IMR-90 (cell line): ENCODE measurements at regions of chrX and their contacts with region 1.

Region 1: GRCh38 chrX:123738378-123738940 is 5.6 kb upstream of the THOC2 start:
- DNase-seq: no peak
- ATAC-seq: no peak
- H3K4me3 ChIP-seq: no peak overlapping the region
- H3K27ac ChIP-seq: no peak overlapping the region
- H3K4me1 ChIP-seq: no peaks in the 10 kb centered on the region; the same call in 1 of the 2 replicates
- H3K27me3 ChIP-seq: no peaks in the 10 kb centered on the region
- CTCF ChIP-seq: no peak
- POLR2A ChIP-seq: no peak
- RAD21 ChIP-seq: no peak

Region 2: DNA sequence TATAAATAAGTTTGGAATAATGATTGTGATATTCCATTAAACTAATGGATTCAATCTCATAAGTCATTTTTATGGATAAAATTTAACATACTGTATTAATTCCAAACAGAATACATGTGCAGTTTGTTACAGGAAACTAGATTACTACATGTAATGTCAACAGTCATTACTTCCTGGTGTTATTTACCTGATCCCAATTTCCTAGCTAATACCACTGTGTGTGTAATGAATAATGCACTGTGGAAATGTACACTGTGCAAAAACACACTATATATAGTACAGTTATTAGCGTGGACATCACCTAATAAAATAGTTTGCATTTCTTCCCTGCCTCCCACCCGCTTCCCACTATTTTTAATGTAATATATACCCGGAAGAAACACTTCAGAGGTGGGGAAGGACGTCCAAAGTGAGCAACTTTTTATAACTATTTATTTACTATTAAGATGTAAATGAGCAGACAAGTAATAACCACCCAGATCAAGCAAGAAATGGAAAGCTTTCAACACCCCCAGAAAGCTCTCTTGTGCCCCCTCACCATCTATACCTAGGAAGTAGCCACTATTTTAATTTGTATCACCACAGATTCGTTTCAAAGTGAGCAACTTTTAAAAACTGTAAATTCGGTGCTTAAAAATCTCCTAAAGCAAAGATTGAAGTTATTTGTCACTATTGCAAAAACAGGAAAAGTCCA is 224.7 kb before region 1 on chrX:
- CTCF ChIA-PET with region 1: no interaction called
- POLR2A ChIA-PET with region 1: no interaction called
- dilution Hi-C with region 1: no loop called
- in situ Hi-C with region 1: no loop called
- intact Hi-C with region 1: no loop called
- DNase-seq: no peak
- ATAC-seq: no peak
- H3K4me3 ChIP-seq: no peak overlapping the region
- H3K27ac ChIP-seq: no peak overlapping the region
- H3K4me1 ChIP-seq: no peaks in the 10 kb centered on the region
- H3K27me3 ChIP-seq: no peaks in the 10 kb centered on the region
- CTCF ChIP-seq: no peak
- POLR2A ChIP-seq: no peak
- RAD21 ChIP-seq: no peak

Region 3: GRCh38 chrX:123648028-123648810 is 90.2 kb before region 1 on chrX:
- CTCF ChIA-PET with region 1: no interaction called
- POLR2A ChIA-PET with region 1: no interaction called
- dilution Hi-C with region 1: no loop called
- in situ Hi-C with region 1: no loop called
- intact Hi-C with region 1: no loop called
- DNase-seq: peak; percentile 83
- ATAC-seq: peak; percentile 98
- H3K4me3 ChIP-seq: no peak overlapping the region
- H3K27ac ChIP-seq: no peak overlapping the region
- H3K4me1 ChIP-seq: peaks cover 1% of the 10 kb centered on the region; the same call in 1 of the 2 replicates
- H3K27me3 ChIP-seq: no peaks in the 10 kb centered on the region
- CTCF ChIP-seq: no peak
- POLR2A ChIP-seq: no peak
- RAD21 ChIP-seq: no peak

Region 4: GRCh38 chrX:123779908-123780396 is 41.5 kb after region 1 on chrX:
- CTCF ChIA-PET with region 1: interaction called, 3 read pairs
- POLR2A ChIA-PET with region 1: interaction called, 14 read pairs
- dilution Hi-C with region 1: no loop called
- in situ Hi-C with region 1: no loop called
- intact Hi-C with region 1: no loop called
- DNase-seq: no peak
- ATAC-seq: no peak
- H3K4me3 ChIP-seq: no peak overlapping the region
- H3K27ac ChIP-seq: no peak overlapping the region
- H3K4me1 ChIP-seq: no peaks in the 10 kb centered on the region
- H3K27me3 ChIP-seq: no peaks in the 10 kb centered on the region
- CTCF ChIP-seq: no peak
- POLR2A ChIP-seq: no peak
- RAD21 ChIP-seq: no peak

Region 5: GRCh38 chrX:123859846-123860838 is 121.7 kb after region 1 on chrX and contains the start of gene XIAP:
- CTCF ChIA-PET with region 1: no interaction called
- POLR2A ChIA-PET with region 1: no interaction called
- dilution Hi-C with region 1: no loop called
- in situ Hi-C with region 1: no loop called
- intact Hi-C with region 1: no loop called
- DNase-seq: peak; percentile 84
- ATAC-seq: peak; percentile 96
- H3K4me3 ChIP-seq: peak within 1 kb of the TSS; percentile 90
- H3K27ac ChIP-seq: peak within 1 kb of the TSS; percentile 97
- H3K4me1 ChIP-seq: no peaks in the 10 kb centered on the region
- H3K27me3 ChIP-seq: no peaks in the 10 kb centered on the region
- CTCF ChIP-seq: no peak
- POLR2A ChIP-seq: peak; percentile 86
- RAD21 ChIP-seq: no peak
- total RNA-seq, gene XIAP: 17.4 and 30.0 TPM in 2 replicates

Region 6: DNA sequence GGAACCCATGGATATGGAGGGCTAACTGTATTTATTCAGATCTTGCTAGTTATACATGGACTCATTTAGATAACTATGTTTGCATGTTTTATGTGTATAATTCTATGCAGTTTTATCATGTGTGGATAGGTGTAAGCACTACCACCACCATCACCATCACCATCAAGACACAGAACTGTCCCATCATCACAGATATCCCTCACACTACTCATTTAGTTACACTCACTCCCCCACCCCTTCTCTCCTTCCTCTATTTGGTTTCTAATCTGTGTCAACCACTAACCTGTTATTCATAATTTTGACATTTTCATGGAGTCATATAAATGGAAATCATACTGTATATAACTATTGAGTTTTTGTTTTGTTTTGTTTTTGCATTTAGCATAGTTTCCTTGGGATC is 266.8 kb after region 1 on chrX:
- CTCF ChIA-PET with region 1: no interaction called
- POLR2A ChIA-PET with region 1: no interaction called
- dilution Hi-C with region 1: no loop called
- in situ Hi-C with region 1: no loop called
- intact Hi-C with region 1: no loop called
- DNase-seq: no peak
- ATAC-seq: no peak
- H3K4me3 ChIP-seq: no peak overlapping the region
- H3K27ac ChIP-seq: no peak overlapping the region
- H3K4me1 ChIP-seq: no peaks in the 10 kb centered on the region
- H3K27me3 ChIP-seq: no peaks in the 10 kb centered on the region
- CTCF ChIP-seq: no peak
- POLR2A ChIP-seq: no peak
- RAD21 ChIP-seq: no peak